ENCODE measurements at regions of chr5 and their contacts with region 1.

Region 1: DNA sequence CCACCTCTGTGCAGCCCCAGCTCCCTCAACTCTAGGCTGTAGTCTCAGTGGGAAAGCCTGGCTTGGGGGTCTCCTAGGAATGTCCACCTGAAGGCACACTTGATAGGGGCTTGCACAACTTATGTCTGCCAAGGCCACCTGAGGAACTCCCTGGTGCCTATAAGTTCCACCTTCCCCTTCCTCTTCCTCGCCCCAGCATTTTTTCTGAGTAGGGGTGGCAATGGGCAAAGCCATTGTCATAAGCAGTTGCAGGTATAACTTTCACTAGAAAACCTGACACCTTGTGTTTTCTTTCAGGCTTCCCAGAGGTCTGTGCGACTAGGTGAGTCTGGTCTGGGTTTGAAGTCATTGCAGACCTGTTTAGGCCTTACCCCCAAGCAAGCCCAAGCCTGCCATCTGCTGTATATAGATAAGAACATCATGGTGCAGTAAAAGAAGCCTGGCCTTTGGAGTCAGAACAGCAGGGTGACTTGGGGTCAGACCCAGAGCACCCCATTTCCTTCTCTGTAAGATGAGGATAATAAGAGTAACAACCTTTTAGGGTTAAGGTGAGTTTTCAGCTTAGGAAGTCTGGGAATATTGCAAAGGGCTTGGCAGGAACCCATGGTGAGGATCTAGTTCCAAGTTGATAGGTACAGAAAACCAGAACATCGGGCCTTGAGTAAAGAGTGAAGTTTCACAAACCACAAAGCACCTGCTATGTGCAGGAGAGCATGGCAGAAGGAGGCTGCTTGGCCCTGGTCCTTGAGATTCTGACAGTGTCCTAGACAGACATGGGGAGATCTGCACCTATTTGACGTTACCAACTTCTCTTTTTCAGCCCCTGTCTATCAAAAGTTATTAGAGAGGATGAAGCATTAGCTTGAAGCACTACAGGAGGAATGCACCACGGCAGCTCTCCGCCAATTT is 33.8 kb downstream of the TGFBI start:
- DNase-seq: peak; percentile 68 to 69
- H3K4me3 ChIP-seq: no peak overlapping the region
- H3K4me3 Mint-ChIP-seq: no peak overlapping the region
- H3K27ac Mint-ChIP-seq: no peak overlapping the region
- H3K4me1 ChIP-seq: peaks cover 30% of the 10 kb centered on the region
- H3K4me1 Mint-ChIP-seq: peaks cover 44% of the 10 kb centered on the region
- H3K27me3 ChIP-seq: no peaks in the 10 kb centered on the region
- H3K27me3 Mint-ChIP-seq: no peaks in the 10 kb centered on the region
- CTCF ChIP-seq: peak; percentile 53 to 56

Region 2: GRCh38 chr5:135887351-135887864 is 175.2 kb before region 1 on chr5:
- CTCF ChIA-PET with region 1: no interaction called
- POLR2A ChIA-PET with region 1: no interaction called
- intact Hi-C with region 1: loop called (anchors 1 kb)
- DNase-seq: peak; percentile 80 to 84
- H3K4me3 ChIP-seq: no peak overlapping the region
- H3K4me3 Mint-ChIP-seq: no peak overlapping the region
- H3K27ac Mint-ChIP-seq: no peak overlapping the region
- H3K4me1 ChIP-seq: peaks cover 11% of the 10 kb centered on the region; the same call in 1 of the 2 replicates
- H3K4me1 Mint-ChIP-seq: peaks cover 8% of the 10 kb centered on the region
- H3K27me3 ChIP-seq: no peaks in the 10 kb centered on the region
- H3K27me3 Mint-ChIP-seq: no peaks in the 10 kb centered on the region
- CTCF ChIP-seq: peak; percentile 86 to 87

Region 3: DNA sequence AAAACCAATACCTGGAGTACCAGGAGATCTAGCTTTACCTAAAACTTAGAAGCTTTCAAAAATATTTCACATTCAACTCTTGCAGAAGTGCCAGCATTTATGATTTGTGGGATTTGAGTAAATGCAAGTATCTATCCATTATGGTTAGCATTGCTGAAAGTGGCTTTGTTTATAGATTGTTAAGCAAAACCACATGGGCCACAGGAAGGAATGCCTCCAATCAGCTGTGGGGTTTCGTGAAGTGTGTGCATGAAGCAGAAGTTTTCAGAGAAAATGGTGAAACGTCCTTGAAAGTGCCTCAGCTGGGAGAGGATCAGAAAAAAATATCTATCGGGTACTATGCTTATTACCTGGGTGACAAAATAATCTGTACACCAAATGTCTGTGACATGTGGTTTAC is 112.0 kb before region 1 on chr5:
- CTCF ChIA-PET with region 1: interaction called, 7 read pairs
- POLR2A ChIA-PET with region 1: no interaction called
- intact Hi-C with region 1: loop called (anchors 1 kb)
- DNase-seq: no peak
- H3K4me3 ChIP-seq: no peak overlapping the region
- H3K4me3 Mint-ChIP-seq: no peak overlapping the region
- H3K27ac Mint-ChIP-seq: no peak overlapping the region
- H3K4me1 ChIP-seq: peaks cover 25% of the 10 kb centered on the region
- H3K4me1 Mint-ChIP-seq: peaks cover 16% of the 10 kb centered on the region
- H3K27me3 ChIP-seq: no peaks in the 10 kb centered on the region
- H3K27me3 Mint-ChIP-seq: no peaks in the 10 kb centered on the region
- CTCF ChIP-seq: no peak

Region 4: GRCh38 chr5:136028782-136029742 is 33.6 kb before region 1 on chr5 and contains the start of gene TGFBI:
- CTCF ChIA-PET with region 1: interaction called, 4 read pairs
- POLR2A ChIA-PET with region 1: interaction called, 3 read pairs
- intact Hi-C with region 1: loop called (anchors 1 kb)
- DNase-seq: peak; percentile 71 to 82
- H3K4me3 ChIP-seq: peak within 1 kb of the TSS; percentile 58
- H3K4me3 Mint-ChIP-seq: peak within 1 kb of the TSS; percentile 74
- H3K27ac Mint-ChIP-seq: no peak within 1 kb of the TSS
- H3K4me1 ChIP-seq: peaks cover 16% of the 10 kb centered on the region; the same call in 1 of the 2 replicates
- H3K4me1 Mint-ChIP-seq: peaks cover 7% of the 10 kb centered on the region
- H3K27me3 ChIP-seq: no peaks in the 10 kb centered on the region
- H3K27me3 Mint-ChIP-seq: no peaks in the 10 kb centered on the region
- CTCF ChIP-seq: peak in 1 of 2 experiments; percentile 44
- total RNA-seq, gene TGFBI: 131 and 142 TPM in 2 replicates

Region 5: DNA sequence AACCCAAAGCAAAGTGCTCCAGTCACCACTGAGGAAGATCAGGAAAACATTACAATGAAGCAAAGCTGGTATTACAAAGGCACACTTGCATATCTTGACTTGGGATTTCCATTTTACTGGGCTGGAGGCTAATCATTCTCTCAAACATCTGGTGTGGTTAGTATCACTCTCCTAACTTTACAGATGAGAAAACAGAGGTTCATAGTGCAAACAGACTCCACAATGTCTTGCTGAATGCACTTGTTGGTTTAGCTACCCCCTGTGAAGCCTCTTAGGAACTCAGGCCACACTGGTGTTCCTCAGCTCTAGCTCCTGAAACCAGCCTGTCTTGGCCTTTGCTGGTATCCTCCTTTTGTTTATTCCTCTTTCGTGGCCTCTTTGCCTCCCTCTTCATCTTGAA is 40.5 kb after region 1 on chr5:
- CTCF ChIA-PET with region 1: interaction called, 4 read pairs
- POLR2A ChIA-PET with region 1: no interaction called
- intact Hi-C with region 1: loop called (anchors 2 kb)
- DNase-seq: no peak
- H3K4me3 ChIP-seq: no peak overlapping the region
- H3K4me3 Mint-ChIP-seq: no peak overlapping the region
- H3K27ac Mint-ChIP-seq: peak overlapping the region; percentile 87
- H3K4me1 ChIP-seq: peaks cover 96% of the 10 kb centered on the region
- H3K4me1 Mint-ChIP-seq: peaks cover 54% of the 10 kb centered on the region
- H3K27me3 ChIP-seq: no peaks in the 10 kb centered on the region
- H3K27me3 Mint-ChIP-seq: no peaks in the 10 kb centered on the region
- CTCF ChIP-seq: no peak

Region 6: GRCh38 chr5:136212252-136212721 is 149.7 kb after region 1 on chr5:
- CTCF ChIA-PET with region 1: interaction called, 8 read pairs
- POLR2A ChIA-PET with region 1: no interaction called
- intact Hi-C with region 1: loop called (anchors 1 kb)
- DNase-seq: peak; percentile 68 to 70
- H3K4me3 ChIP-seq: no peak overlapping the region
- H3K4me3 Mint-ChIP-seq: no peak overlapping the region
- H3K27ac Mint-ChIP-seq: no peak overlapping the region
- H3K4me1 ChIP-seq: no peaks in the 10 kb centered on the region
- H3K4me1 Mint-ChIP-seq: no peaks in the 10 kb centered on the region
- H3K27me3 ChIP-seq: no peaks in the 10 kb centered on the region
- H3K27me3 Mint-ChIP-seq: no peaks in the 10 kb centered on the region
- CTCF ChIP-seq: peak; percentile 93 to 94